Breast epithelium (tissue), 4 donors: ENCODE measurements at regions of chr5 and their contacts with region 1.

Region 1: GRCh38 chr5:148988328-148988727 is 74.5 kb downstream of the SH3TC2 start:
- DNase-seq: no peak
- H3K4me3 ChIP-seq: no peak overlapping the region
- H3K27ac ChIP-seq: no peak overlapping the region
- H3K4me1 ChIP-seq: no peaks in the 10 kb centered on the region
- H3K27me3 ChIP-seq: no peaks in the 10 kb centered on the region
- CTCF ChIP-seq: no peak
- POLR2A ChIP-seq: no peak

Region 2: DNA sequence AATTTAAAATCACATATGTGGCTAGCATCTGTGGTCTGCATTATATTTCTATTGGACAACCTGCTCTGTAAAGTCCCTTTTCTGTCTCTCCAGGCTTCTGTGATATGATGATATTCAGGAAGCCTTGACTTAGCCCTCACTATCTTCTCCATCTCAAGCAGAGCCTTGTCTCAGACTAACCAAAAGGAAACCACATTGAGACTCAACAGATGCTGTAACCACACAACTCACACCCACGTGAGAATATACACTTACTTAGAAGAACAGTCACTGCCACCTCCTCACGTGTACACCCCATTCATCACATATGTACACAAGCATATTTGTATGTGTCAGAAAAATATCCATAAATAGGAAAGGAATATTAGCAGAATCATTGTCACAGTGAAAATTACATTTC is 367.6 kb before region 1 on chr5:
- intact Hi-C with region 1: loop called (anchors 5 kb)
- DNase-seq: no peak
- H3K4me3 ChIP-seq: no peak overlapping the region
- H3K27ac ChIP-seq: no peak overlapping the region
- H3K4me1 ChIP-seq: no peaks in the 10 kb centered on the region
- H3K27me3 ChIP-seq: no peaks in the 10 kb centered on the region
- CTCF ChIP-seq: no peak
- POLR2A ChIP-seq: no peak